ENCODE measurements at regions of chr3 and their contacts with region 1.

Region 1: DNA sequence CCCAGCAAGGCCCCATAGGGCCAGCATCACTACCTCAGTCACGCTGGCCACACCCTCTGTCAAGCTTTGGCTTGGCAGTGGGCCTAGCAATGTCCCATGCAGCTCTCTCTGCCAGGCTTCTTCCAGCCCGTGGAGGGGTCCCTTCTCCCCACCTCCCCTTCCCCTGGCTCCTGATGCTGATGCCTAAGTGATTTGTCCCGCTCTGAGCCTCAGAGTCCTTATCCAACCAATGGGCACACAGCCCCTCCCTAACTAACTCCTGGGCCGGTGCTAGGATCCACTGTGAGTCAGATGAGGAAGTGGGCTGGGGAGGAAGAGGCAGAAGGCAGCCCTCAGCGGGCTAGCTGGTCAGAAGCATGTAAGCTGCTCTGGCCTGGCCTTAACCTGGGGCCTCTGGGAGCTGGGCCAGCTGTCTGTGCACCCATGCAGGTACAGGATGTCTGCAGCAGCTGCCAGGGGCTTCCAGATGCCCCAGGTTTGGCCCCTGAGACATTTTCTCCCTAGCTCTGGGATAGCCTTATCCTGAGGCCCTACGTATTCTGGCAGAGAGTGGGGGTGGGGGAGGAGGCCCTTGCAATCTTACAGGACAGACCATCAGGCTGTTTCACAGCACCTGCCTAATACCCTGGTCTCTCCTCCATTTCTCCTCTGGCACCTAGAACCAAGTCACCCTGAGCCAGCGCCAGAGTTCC is 740 bp upstream of the ZBTB47 start:
- DNase-seq: peak in 2 of 14 experiments; percentile 50 to 57
- ATAC-seq: no peak
- H3K4me3 ChIP-seq: no peak overlapping the region
- H3K4me3 Mint-ChIP-seq: peak overlapping the region; percentile 76
- H3K27ac ChIP-seq: no peak overlapping the region
- H3K27ac Mint-ChIP-seq: no peak overlapping the region
- H3K4me1 ChIP-seq: peaks cover 31% of the 10 kb centered on the region
- H3K4me1 Mint-ChIP-seq: peaks cover 33% of the 10 kb centered on the region
- H3K27me3 ChIP-seq: no peaks in the 10 kb centered on the region
- H3K27me3 Mint-ChIP-seq: no peaks in the 10 kb centered on the region
- CTCF ChIP-seq: no peak

Region 2: GRCh38 chr3:42667523-42668412 is 15.0 kb after region 1 on chr3:
- CTCF ChIA-PET with region 1: no interaction called
- POLR2A ChIA-PET with region 1: no interaction called
- intact Hi-C with region 1: no loop called
- DNase-seq: peak in 1 of 14 experiments; percentile 23
- ATAC-seq: no peak
- H3K4me3 ChIP-seq: no peak overlapping the region
- H3K4me3 Mint-ChIP-seq: no peak overlapping the region
- H3K27ac ChIP-seq: no peak overlapping the region
- H3K27ac Mint-ChIP-seq: no peak overlapping the region
- H3K4me1 ChIP-seq: no peaks in the 10 kb centered on the region
- H3K4me1 Mint-ChIP-seq: no peaks in the 10 kb centered on the region
- H3K27me3 ChIP-seq: no peaks in the 10 kb centered on the region
- H3K27me3 Mint-ChIP-seq: no peaks in the 10 kb centered on the region
- CTCF ChIP-seq: no peak

Region 3: DNA sequence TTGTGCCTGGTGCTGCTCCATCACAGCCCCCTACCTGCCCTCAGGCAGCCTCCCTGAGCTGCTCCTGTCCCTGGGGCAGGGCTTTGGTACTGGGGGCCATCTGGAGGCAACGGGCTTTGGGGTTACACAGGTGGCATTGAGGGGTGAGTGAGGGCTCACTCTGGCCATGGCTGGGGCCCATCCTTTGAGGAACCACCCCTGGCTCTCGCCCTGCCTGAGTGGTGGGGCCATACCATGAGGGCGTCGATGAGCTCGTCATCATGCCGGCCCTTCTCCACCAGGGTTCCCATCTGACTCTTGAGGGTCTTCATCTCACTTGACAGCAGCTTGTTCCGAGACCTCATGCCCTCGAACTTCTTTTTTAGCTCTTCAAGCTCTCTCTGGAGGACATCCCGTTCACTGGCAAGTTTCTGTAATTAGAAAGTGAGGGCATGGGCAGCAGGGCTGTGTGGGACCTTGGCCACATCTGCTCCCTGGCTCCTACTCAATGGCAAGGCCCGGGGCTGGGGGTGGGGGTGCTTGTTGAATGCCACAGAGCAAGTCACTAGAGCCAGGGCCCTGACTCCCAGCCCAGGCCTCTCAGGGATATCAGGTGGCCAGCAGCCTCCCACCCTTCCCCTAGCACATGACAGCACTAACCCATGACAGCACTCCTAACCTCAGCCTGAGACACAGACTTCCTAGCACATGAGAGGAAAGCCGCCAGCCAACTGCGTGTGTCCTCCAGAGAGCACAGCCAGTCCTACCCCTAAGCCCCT is 86.8 kb after region 1 on chr3:
- CTCF ChIA-PET with region 1: no interaction called
- POLR2A ChIA-PET with region 1: no interaction called
- intact Hi-C with region 1: loop called in 1 of 2 experiments (anchors 5 kb)
- DNase-seq: peak in 1 of 14 experiments; percentile 6
- ATAC-seq: no peak
- H3K4me3 ChIP-seq: no peak overlapping the region
- H3K4me3 Mint-ChIP-seq: no peak overlapping the region
- H3K27ac ChIP-seq: no peak overlapping the region
- H3K27ac Mint-ChIP-seq: no peak overlapping the region
- H3K4me1 ChIP-seq: peaks cover 6% of the 10 kb centered on the region
- H3K4me1 Mint-ChIP-seq: peaks cover 11% of the 10 kb centered on the region
- H3K27me3 ChIP-seq: no peaks in the 10 kb centered on the region
- H3K27me3 Mint-ChIP-seq: no peaks in the 10 kb centered on the region
- CTCF ChIP-seq: no peak